CD14-positive monocyte (primary cell): ENCODE measurements at regions of chr15 and their contacts with region 1.

Region 1: GRCh38 chr15:31326156-31326732 is 391 bp upstream of the KLF13 start:
- DNase-seq: peak; percentile 98 to 99 (median 98)
- H3K4me3 ChIP-seq: peak overlapping the region; percentile 80 to 99 (median 97)
- H3K4me3 Mint-ChIP-seq: peak overlapping the region; percentile 90 to 93
- H3K27ac ChIP-seq: peak overlapping the region; percentile 91 to 94
- H3K27ac Mint-ChIP-seq: peak overlapping the region; percentile 83 to 95 (median 88)
- H3K4me1 ChIP-seq: peaks cover 44 to 57% of the 10 kb centered on the region in 2 donors
- H3K4me1 Mint-ChIP-seq: peaks cover 56% of the 10 kb centered on the region
- H3K27me3 ChIP-seq: no peaks in the 10 kb centered on the region
- H3K27me3 Mint-ChIP-seq: peaks cover 0 to 1% (median 0%) of the 10 kb centered on the region in 3 donors
- CTCF ChIP-seq: no peak

Region 2: GRCh38 chr15:30991255-30992072 is 334.8 kb before region 1 on chr15 and contains the start of gene MTMR10:
- intact Hi-C with region 1: loop called in 1 of 2 experiments (anchors 5 kb)
- DNase-seq: peak; percentile 72 to 77 (median 73)
- H3K4me3 ChIP-seq: peak within 1 kb of the TSS; percentile 87 to 100 (median 99)
- H3K4me3 Mint-ChIP-seq: peak within 1 kb of the TSS; percentile 93
- H3K27ac ChIP-seq: peak within 1 kb of the TSS; percentile 98 to 99
- H3K27ac Mint-ChIP-seq: peak within 1 kb of the TSS; percentile 96 to 98 (median 97)
- H3K4me1 ChIP-seq: peaks cover 15 to 28% of the 10 kb centered on the region in 2 donors
- H3K4me1 Mint-ChIP-seq: peaks cover 22% of the 10 kb centered on the region
- H3K27me3 ChIP-seq: no peaks in the 10 kb centered on the region
- H3K27me3 Mint-ChIP-seq: peaks cover 0 to 3% (median 2%) of the 10 kb centered on the region in 3 donors
- CTCF ChIP-seq: no peak
- polyA plus RNA-seq, gene MTMR10: 8.7 to 23.3 (median 15.9) TPM

Region 3: DNA sequence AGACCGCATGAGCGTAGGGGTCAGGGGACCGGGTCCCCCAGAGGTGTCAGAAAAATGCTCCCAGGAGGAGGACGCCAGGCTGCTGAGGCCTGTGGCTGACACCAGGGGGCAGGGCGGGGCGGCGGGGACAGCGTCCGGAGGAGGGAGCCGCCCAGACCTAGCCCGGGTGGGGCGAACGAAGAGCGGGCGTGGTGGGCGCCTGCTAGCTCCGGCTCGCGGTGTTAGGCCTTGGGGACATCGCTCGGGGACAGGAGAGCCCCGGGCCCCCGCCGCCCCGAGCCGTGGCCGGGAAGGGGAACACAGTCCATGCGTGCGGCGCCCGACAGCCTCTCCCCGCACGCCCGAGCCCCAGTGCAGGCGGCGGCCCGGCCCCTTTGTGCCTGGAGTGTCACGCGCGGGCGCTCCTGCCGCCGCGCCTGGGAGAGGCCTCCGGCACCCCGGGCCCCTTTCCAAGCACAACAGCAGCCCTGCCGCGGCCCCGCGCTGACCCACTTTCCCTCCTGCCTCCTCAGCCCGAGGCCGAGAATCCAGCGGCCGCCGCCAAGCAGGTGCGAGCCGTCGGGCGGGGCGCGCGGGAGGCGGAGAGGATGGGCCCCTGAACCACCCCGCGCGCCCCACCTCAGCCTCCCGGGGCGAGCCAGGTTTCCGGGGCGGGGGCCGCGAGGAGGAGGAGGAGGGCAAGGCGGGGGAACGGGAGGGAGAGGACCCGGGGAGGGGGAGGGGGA is 110.6 kb before region 1 on chr15:
- intact Hi-C with region 1: loop called (anchors 1 to 2 kb)
- DNase-seq: peak; percentile 82 to 85 (median 83)
- H3K4me3 ChIP-seq: peak overlapping the region; percentile 33 to 72 (median 44)
- H3K4me3 Mint-ChIP-seq: peak overlapping the region; percentile 80 to 83
- H3K27ac ChIP-seq: peak overlapping the region; percentile 91 to 93
- H3K27ac Mint-ChIP-seq: peak overlapping the region; percentile 90 to 98 (median 96)
- H3K4me1 ChIP-seq: peaks cover 68 to 81% of the 10 kb centered on the region in 2 donors
- H3K4me1 Mint-ChIP-seq: peaks cover 80% of the 10 kb centered on the region
- H3K27me3 ChIP-seq: no peaks in the 10 kb centered on the region
- H3K27me3 Mint-ChIP-seq: peaks cover 0 to 3% (median 0%) of the 10 kb centered on the region in 3 donors
- CTCF ChIP-seq: peak; percentile 98

Region 4: DNA sequence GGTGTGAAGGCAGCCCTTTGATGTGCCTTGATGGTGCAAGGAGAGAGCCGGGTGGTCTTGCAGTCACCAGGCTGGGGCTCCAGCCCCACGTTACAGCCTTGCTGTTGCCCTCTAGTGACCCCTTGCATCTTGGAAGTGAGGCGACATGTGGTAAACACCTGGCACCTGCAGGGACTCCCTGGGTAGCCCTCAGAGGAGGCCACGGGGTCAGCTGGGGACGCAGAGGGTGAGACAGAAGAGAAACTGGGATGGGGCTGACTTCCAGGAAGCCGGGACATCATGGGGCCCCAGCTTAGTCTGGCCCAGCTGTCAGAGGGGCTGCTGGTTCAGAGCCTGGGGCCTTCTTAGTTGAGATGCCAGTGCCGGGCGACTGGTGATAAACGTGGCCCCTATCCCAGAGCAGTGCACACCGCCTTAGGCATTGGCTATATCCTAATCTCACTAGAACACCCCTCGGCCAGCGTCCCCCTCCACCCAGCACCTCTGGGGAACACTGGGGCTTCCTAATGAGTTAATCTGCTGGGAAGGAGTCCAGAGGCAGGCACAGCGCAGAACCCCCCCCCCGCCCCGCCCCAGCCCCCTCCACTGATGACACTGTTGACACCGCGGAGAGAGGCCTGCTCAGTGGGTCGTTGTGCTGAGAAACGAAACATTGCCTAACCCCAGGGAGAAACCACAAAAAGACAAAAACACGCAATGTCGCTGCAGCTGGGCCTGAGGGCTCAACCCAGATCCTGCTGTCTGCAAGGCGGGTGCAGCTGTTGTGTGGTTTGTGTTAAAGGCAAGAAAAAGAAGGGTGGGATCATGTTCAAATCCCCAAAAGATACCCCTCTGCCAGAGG is 60.2 kb before region 1 on chr15:
- intact Hi-C with region 1: loop called (anchors 1 to 5 kb)
- DNase-seq: peak; percentile 93 to 95 (median 95)
- H3K4me3 ChIP-seq: peak overlapping the region in 1 of 3 experiments; percentile 45
- H3K4me3 Mint-ChIP-seq: peak overlapping the region; percentile 55 to 64
- H3K27ac ChIP-seq: peak overlapping the region; percentile 96 to 99
- H3K27ac Mint-ChIP-seq: peak overlapping the region; percentile 99 to 100 (median 100)
- H3K4me1 ChIP-seq: peaks cover 99 to 100% of the 10 kb centered on the region in 2 donors
- H3K4me1 Mint-ChIP-seq: peaks cover 99% of the 10 kb centered on the region
- H3K27me3 ChIP-seq: no peaks in the 10 kb centered on the region
- H3K27me3 Mint-ChIP-seq: no peaks in the 10 kb centered on the region
- CTCF ChIP-seq: no peak

Region 5: GRCh38 chr15:31365655-31366127 is 39.4 kb after region 1 on chr15:
- intact Hi-C with region 1: loop called in 1 of 2 experiments (anchors 5 kb)
- DNase-seq: peak; percentile 76 to 78 (median 78)
- H3K4me3 ChIP-seq: peak overlapping the region in 1 of 3 experiments; percentile 53
- H3K4me3 Mint-ChIP-seq: peak overlapping the region; percentile 63 to 74
- H3K27ac ChIP-seq: peak overlapping the region; percentile 45 to 56
- H3K27ac Mint-ChIP-seq: peak overlapping the region; percentile 64 to 86 (median 81)
- H3K4me1 ChIP-seq: peaks cover 74 to 80% of the 10 kb centered on the region in 2 donors
- H3K4me1 Mint-ChIP-seq: peaks cover 93% of the 10 kb centered on the region
- H3K27me3 ChIP-seq: no peaks in the 10 kb centered on the region
- H3K27me3 Mint-ChIP-seq: peaks cover 0 to 2% (median 0%) of the 10 kb centered on the region in 3 donors
- CTCF ChIP-seq: peak; percentile 69

Region 6: DNA sequence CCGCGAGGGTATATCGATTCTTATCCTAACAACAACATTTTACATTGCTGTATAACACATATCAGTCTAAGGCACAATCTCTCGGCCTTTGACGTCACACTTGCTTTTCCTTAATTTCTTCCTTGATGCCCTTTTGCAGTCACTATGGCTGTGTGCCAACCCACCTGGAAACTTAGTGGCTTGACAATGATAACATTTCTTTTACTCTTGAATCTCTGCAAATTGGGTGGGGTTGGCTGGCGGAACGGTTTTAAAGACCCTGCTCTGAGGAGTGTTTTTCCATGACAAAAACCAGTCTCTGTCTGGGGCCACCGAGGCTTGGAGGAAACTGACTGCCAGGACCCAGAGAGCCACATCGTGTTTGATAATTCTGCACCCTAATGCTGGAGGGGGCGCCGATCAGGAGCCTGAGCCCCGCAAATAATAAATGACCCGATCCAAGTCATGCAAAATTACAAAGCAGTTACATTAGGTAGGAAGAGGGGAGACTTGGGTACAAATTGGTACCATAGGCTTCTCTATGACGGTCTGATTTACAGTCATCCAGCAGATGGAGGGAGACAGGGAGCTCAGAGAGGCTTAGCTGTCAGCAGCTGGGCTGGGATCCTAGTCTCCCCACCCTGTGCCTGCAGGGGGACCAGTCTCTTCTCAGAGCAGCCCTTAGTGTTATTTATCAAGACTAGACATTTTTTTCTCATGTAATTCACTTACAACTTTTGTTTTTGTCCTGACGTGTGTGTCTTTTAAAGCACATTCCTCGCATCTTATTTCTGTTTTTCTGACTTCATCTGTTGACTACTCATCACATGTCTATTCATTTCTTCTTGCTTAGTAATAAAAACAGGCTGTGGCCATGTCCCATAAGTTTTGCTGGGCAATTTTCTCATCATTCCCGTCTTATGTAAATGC is 116.2 kb after region 1 on chr15:
- intact Hi-C with region 1: loop called in 1 of 2 experiments (anchors 5 kb)
- DNase-seq: no peak
- H3K4me3 ChIP-seq: no peak overlapping the region
- H3K4me3 Mint-ChIP-seq: no peak overlapping the region
- H3K27ac ChIP-seq: no peak overlapping the region
- H3K27ac Mint-ChIP-seq: peak overlapping the region; percentile 82 to 97 (median 91)
- H3K4me1 ChIP-seq: peaks cover 27 to 42% of the 10 kb centered on the region in 2 donors
- H3K4me1 Mint-ChIP-seq: peaks cover 38% of the 10 kb centered on the region
- H3K27me3 ChIP-seq: no peaks in the 10 kb centered on the region
- H3K27me3 Mint-ChIP-seq: peaks cover 3 to 7% (median 5%) of the 10 kb centered on the region in 3 donors
- CTCF ChIP-seq: no peak